BJ (cell line): ENCODE measurements at regions of chr4 and their contacts with region 1.

Region 1: GRCh38 chr4:16505726-16506125 is 279.5 kb upstream of the TAPT1 start:
- DNase-seq: no peak
- H3K4me3 ChIP-seq: no peak overlapping the region
- H3K27me3 ChIP-seq: no peaks in the 10 kb centered on the region
- CTCF ChIP-seq: peak; percentile 34; the same call in 1 of the 2 replicates

Region 2: DNA sequence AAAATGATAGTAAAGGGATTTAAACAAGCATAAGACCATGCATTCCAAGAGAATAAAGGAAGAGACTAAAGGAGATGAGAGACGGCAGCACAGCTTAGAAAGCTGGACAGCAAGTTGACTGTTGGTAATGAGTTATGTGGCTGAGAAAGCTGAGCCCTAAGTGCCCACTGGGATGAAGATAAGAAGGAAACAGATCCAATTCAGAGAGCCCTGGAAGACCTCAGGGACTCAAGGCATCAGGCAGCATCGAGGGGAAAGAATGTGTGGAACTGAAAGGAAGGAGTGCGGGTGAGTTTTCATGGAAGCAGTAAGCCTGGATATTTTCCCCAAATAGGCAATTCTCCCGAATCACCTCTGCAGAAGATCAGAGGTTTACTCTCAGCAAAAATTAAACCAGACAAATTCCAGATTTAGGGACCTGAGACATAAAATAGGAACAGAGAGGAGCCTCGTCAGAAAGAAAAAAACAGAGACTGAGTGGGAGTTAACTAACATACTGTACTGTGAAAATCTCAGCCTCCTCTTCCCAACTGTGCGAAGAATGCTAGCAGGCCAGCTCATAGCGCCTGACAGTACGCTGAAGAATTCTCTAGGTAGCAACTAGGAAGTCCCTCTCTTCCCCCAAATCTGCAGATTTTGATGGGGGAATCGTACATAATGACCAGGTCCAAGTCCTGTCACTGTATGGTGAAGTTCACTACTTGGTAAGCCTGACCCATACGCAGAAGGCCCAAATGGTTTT is 91.7 kb before region 1 on chr4:
- CTCF ChIA-PET with region 1: no interaction called
- POLR2A ChIA-PET with region 1: no interaction called
- DNase-seq: no peak
- H3K4me3 ChIP-seq: no peak overlapping the region
- H3K27me3 ChIP-seq: no peaks in the 10 kb centered on the region
- CTCF ChIP-seq: no peak

Region 3: DNA sequence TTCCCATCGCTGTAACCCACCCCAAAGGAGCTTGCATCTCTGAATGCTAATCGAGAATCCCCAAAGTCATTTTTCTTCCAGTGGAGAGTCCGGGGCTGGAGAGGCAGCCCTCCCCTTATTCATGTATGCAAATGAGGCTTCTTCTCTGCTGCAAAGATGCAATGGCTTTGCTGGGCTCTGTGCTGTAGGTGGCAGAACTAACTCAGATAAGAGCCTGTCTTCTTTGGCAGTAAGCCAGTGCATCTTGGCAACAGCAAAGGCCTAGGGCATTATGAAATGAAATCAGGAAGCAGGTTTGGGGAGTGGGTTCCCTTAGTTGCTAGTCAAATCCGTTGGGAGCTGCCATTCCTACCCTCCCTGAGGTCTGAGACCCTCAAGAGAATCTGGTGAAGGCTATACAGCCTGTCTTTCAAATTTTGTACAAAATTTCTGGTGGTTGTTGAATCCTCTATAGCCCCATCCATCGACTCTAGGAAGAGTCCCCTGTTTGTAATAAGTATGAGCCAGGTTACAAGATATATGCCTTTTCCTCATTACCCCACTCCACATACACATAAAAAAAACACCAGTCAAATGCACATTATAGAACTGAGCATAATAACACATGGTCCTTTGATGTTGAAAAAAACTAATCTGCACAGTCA is 11.2 kb after region 1 on chr4:
- CTCF ChIA-PET with region 1: interaction called, 12 read pairs
- POLR2A ChIA-PET with region 1: no interaction called
- DNase-seq: no peak
- H3K4me3 ChIP-seq: no peak overlapping the region
- H3K27me3 ChIP-seq: no peaks in the 10 kb centered on the region
- CTCF ChIP-seq: peak; percentile 67